Calu3 (cell line): ENCODE measurements at regions of chr9 and their contacts with region 1.

Region 1: GRCh38 chr9:18442629-18443491 is 31.1 kb upstream of the ADAMTSL1 start:
- DNase-seq: peak; percentile 66
- H3K4me3 Mint-ChIP-seq: no peak overlapping the region
- H3K27ac Mint-ChIP-seq: no peak overlapping the region
- H3K4me1 Mint-ChIP-seq: peaks cover 12% of the 10 kb centered on the region
- H3K27me3 Mint-ChIP-seq: no peaks in the 10 kb centered on the region
- CTCF ChIP-seq: peak; percentile 61

Region 2: DNA sequence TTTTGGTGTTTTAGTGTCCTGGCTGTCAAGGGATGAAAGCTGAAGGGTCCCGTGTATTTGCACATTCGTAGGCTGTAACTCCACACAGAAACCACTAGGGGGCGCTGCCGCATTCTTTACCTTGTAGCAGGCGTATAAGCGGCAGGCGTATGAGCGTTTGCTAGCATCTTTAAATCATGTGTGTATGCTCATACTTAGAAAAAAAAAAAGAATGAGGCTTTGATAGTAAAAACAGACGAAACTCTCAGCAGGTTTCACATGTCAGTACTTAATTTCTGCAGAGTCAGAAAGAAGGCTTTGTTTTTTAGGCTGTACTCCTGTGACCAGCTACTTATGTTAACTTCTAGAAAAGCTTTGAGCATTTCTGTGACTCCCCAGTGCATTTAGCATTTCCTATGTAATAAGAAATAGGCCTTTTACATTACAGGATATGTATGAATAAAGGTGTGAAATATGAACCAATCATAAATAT is 187.7 kb before region 1 on chr9:
- CTCF ChIA-PET with region 1: interaction called, 17 read pairs
- intact Hi-C with region 1: loop called (anchors 1 kb)
- DNase-seq: peak; percentile 72
- H3K4me3 Mint-ChIP-seq: no peak overlapping the region
- H3K27ac Mint-ChIP-seq: no peak overlapping the region
- H3K4me1 Mint-ChIP-seq: no peaks in the 10 kb centered on the region
- H3K27me3 Mint-ChIP-seq: no peaks in the 10 kb centered on the region
- CTCF ChIP-seq: peak; percentile 63